ENCODE measurements at regions of chr9 and their contacts with region 1.

Region 1: DNA sequence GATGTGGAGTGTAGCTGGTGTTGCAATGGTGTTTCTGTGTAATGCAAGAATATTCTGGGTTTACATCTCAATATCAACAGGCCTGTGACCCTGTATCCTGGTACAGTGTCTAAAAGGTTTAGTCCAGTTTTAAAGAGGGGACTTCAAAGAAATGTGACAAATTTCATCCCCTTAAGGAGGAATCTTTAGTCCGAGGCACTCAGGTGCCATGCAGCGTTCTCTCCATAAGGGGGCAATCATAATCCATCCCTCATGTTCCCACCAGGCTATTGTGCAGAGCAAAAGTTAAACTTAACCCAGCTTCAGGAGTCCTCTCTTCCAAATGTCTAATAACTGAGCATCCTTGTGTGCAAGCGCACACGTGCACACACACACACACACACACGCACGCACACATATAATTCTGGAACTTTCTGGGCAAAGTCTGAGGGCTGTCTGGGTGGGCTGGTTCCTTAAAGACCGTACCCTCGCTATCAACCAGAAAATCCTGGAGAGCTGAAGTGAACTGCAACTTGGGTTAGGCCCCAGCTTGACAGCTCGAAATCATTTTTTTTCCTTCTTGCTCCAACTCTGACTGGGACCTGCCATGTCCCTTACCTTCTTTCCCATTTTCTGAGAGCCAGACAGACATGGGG is 46.0 kb downstream of the CRB2 start:
- ATAC-seq: peak; percentile 56 to 95 (median 68)
- H3K4me3 ChIP-seq: no peak overlapping the region
- H3K27ac ChIP-seq: no peak overlapping the region
- H3K4me1 ChIP-seq: peaks cover 25 to 26% of the 10 kb centered on the region in 2 donors

Region 2: GRCh38 chr9:123669346-123669745 is 267.4 kb after region 1 on chr9:
- in situ Hi-C with region 1: no loop called
- ATAC-seq: no peak
- H3K4me3 ChIP-seq: no peak overlapping the region
- H3K27ac ChIP-seq: no peak overlapping the region
- H3K4me1 ChIP-seq: no peaks in the 10 kb centered on the region

Region 3: DNA sequence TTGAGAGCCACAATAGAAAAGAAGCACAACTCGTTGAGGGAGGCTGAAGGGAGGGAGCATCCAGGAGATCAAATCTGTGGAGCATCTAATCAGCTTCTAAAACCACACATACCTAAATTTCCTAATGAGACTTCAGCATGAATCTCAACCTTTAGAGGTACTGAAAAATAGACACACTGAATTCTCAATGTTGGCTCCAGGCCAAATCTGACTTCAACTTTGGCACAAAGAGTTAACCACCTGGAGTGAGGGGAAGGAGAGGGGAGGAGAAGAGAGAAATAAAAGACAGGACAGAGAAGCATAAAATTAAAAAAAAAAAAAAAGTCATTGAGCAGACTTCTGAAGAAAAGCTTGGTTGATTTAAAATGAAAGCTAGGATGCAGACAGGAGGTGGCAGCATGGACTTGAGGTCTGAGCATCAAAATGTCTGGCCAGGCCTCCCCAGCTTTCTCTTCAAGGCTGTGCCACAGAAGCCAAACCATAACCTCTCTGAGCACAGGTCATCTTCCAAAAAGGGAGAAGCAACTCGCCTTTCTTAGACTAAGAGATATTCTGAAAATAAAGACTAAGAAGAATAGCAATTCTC is 322.3 kb after region 1 on chr9:
- in situ Hi-C with region 1: loop called in 1 of 9 experiments (anchors 25 kb)
- ATAC-seq: peak in 3 of 8 experiments; percentile 24 to 69 (median 57)
- H3K4me3 ChIP-seq: no peak overlapping the region
- H3K27ac ChIP-seq: no peak overlapping the region
- H3K4me1 ChIP-seq: no peaks in the 10 kb centered on the region